Common myeloid progenitor, CD34-positive (primary cell): ENCODE measurements at regions of chr9 and their contacts with region 1.

Region 1: GRCh38 chr9:136779808-136780207 is 11.3 kb upstream of the TMEM141 start:
- DNase-seq: no peak
- H3K4me3 ChIP-seq: no peak overlapping the region
- H3K27ac ChIP-seq: no peak overlapping the region
- H3K4me1 ChIP-seq: peaks cover 0 to 5% (median 2%) of the 10 kb centered on the region in 4 experiments
- H3K27me3 ChIP-seq: no peaks in the 10 kb centered on the region

Region 2: DNA sequence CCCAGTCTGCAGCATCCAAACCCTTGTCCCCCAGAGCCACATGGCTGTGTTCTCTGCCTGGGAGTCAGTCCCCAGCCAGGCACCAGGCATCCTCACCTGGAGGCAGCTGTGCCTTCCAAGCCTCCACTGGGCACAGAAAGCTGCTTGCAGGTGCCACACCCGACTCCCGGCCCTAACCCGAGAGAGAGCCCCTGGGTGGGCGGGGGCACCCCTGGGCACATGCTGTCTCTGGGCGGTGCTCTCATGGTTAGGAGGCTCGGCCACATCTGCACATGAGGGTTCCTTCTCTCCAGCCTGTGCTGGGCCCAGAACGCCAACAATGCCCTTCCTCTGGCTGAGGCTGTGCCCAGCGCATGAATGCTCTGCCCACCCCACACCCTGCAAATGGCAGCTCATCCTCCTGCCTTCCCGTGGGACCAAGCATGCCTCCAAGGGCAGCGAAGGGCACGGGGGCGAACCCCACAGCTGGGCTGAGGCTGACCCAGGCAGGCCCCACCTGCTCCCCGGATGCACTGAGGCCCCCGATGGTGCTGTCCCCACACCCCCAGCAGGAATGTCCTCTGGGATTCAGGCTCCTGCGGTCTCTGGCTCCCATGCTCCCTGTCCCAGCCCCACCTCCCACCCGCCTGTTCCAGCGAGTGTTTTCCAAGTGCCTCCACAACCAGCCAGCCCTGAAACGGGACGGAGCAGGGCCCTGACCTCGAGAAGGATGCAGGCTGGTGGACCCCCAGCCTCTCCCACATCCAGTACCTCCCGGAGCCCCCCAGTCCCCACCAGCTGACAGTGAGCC is 850.0 kb before region 1 on chr9:
- CTCF ChIA-PET with region 1: no interaction called
- POLR2A ChIA-PET with region 1: no interaction called
- DNase-seq: no peak
- H3K4me3 ChIP-seq: no peak overlapping the region
- H3K27ac ChIP-seq: no peak overlapping the region
- H3K4me1 ChIP-seq: peaks cover 0 to 20% (median 19%) of the 10 kb centered on the region in 4 experiments
- H3K27me3 ChIP-seq: no peaks in the 10 kb centered on the region

Region 3: GRCh38 chr9:136757328-136757727 is 22.5 kb before region 1 on chr9:
- CTCF ChIA-PET with region 1: interaction called, 10 read pairs
- POLR2A ChIA-PET with region 1: no interaction called
- DNase-seq: no peak
- H3K4me3 ChIP-seq: no peak overlapping the region
- H3K27ac ChIP-seq: no peak overlapping the region
- H3K4me1 ChIP-seq: peaks cover 0 to 17% (median 8%) of the 10 kb centered on the region in 4 experiments
- H3K27me3 ChIP-seq: no peaks in the 10 kb centered on the region

Region 4: DNA sequence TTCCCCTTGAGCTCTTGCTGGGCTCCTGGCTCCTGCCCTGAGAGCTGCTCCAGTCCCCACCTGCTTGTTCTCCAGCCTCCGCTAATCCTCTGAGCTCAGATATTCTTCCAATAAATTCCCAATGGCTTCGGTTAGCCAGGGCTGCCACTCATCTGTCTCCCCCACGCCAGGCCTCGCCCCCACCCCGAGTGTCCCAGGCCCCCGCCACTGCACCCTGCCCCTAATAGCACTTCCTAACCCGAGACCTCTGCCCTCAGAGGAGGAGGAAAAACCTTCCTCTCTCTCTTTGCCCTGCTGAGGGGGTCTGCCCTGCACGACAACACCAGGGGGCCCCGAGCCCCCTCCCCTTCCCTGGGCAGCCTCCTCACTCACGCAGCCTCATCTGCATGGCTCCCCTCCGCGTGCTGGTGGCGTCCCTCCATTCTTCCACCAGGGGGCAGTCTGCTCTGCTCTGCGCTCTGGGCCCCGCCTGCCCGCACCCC is 10.1 kb before region 1 on chr9:
- CTCF ChIA-PET with region 1: interaction called, 75 read pairs
- POLR2A ChIA-PET with region 1: no interaction called
- DNase-seq: peak; percentile 51 to 66 (median 64)
- H3K4me3 ChIP-seq: no peak overlapping the region
- H3K27ac ChIP-seq: no peak overlapping the region
- H3K4me1 ChIP-seq: peaks cover 0 to 8% (median 5%) of the 10 kb centered on the region in 4 experiments
- H3K27me3 ChIP-seq: no peaks in the 10 kb centered on the region

Region 5: GRCh38 chr9:136791642-136792276 is 12.0 kb after region 1 on chr9:
- CTCF ChIA-PET with region 1: interaction called, 75 read pairs
- POLR2A ChIA-PET with region 1: no interaction called
- DNase-seq: peak; percentile 36 to 67 (median 65)
- H3K4me3 ChIP-seq: peak overlapping the region; percentile 45 to 91 (median 76)
- H3K27ac ChIP-seq: peak overlapping the region in 1 of 2 experiments; percentile 83
- H3K4me1 ChIP-seq: peaks cover 0 to 40% (median 24%) of the 10 kb centered on the region in 4 experiments
- H3K27me3 ChIP-seq: peaks cover 0 to 7% (median 0%) of the 10 kb centered on the region in 5 experiments

Region 6: GRCh38 chr9:136868644-136869043 is 88.8 kb after region 1 on chr9:
- CTCF ChIA-PET with region 1: no interaction called
- POLR2A ChIA-PET with region 1: no interaction called
- DNase-seq: no peak
- H3K4me3 ChIP-seq: no peak overlapping the region
- H3K27ac ChIP-seq: no peak overlapping the region
- H3K4me1 ChIP-seq: peaks cover 0 to 14% (median 11%) of the 10 kb centered on the region in 4 experiments
- H3K27me3 ChIP-seq: no peaks in the 10 kb centered on the region